ENCODE measurements at regions of chr1 and their contacts with region 1.

Region 1: GRCh38 chr1:113133038-113133437 is 60.0 kb downstream of the LRIG2 start:
- H3K4me3 ChIP-seq: no peak overlapping the region
- H3K27ac ChIP-seq: no peak overlapping the region
- H3K4me1 ChIP-seq: no peaks in the 10 kb centered on the region
- CTCF ChIP-seq: no peak

Region 2: GRCh38 chr1:112836642-112837041 is 296.4 kb before region 1 on chr1:
- CTCF ChIA-PET with region 1: no interaction called
- POLR2A ChIA-PET with region 1: no interaction called
- H3K4me3 ChIP-seq: no peak overlapping the region
- H3K27ac ChIP-seq: no peak overlapping the region
- H3K4me1 ChIP-seq: peaks cover 3% of the 10 kb centered on the region; the same call in 1 of the 2 replicates
- CTCF ChIP-seq: no peak

Region 3: DNA sequence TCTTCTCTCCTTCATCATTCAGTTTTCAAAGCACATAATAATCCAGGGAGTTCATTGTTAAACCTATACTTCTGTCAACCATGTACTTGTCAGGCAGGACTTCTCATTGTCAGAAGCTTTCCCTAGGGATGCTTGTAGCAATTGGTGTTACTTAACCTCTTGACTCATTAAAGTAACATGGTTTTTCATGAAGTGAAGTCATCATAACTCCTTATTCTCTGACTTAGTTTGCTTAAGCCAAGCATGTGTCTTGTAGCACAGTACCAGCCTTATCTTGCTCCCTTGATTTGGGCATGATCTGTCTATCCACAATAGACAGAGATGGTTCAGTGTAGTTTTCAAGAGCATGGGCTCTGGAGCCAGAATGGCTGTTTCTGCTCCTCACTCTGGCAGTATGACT is 14.8 kb before region 1 on chr1:
- CTCF ChIA-PET with region 1: no interaction called
- POLR2A ChIA-PET with region 1: no interaction called
- H3K4me3 ChIP-seq: no peak overlapping the region
- H3K27ac ChIP-seq: no peak overlapping the region
- H3K4me1 ChIP-seq: no peaks in the 10 kb centered on the region
- CTCF ChIP-seq: no peak

Region 4: DNA sequence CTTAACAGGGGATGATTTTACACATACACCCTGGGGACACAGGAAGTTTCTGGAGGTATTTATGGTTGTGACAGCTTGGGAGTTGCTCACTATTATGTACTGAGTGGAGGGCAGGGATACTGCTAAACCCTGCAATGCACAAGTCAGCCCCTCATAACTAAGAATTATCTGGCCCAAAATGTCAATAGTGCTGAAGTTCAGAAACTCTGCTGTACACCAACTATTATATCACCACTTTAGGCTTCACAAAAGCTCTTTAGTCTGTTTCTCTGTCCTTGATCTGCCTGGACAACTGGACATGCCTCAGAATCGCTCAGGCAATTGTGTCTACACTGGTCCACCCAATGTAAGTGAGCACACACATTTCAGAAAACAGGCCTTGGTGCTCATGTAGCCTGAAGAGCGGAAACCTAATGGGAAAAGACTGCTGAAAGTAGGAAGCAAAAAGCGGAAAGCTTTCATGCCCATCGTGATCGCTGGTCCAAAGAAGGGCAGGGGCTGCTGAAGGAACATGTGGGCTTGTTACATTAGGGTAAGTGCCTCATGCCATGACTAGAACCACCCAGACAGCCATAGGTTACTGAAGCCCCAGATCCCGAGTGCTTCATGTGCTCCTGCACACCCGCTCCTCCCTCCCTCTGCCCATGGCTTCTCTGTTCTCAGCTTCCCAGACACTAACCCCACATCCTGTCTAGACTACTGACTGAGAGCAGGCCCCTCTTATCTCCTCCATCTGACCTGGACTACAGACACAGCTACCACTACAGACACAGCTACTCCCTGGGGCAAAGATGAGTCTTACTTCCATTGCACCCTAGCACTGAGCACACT is 13.4 kb after region 1 on chr1:
- CTCF ChIA-PET with region 1: interaction called, 10 read pairs
- POLR2A ChIA-PET with region 1: interaction called, 12 read pairs
- H3K4me3 ChIP-seq: no peak overlapping the region
- H3K27ac ChIP-seq: no peak overlapping the region
- H3K4me1 ChIP-seq: no peaks in the 10 kb centered on the region
- CTCF ChIP-seq: no peak